Lower leg skin (tissue), 4 donors: ENCODE measurements at regions of chr1 and their contacts with region 1.

Region 1: DNA sequence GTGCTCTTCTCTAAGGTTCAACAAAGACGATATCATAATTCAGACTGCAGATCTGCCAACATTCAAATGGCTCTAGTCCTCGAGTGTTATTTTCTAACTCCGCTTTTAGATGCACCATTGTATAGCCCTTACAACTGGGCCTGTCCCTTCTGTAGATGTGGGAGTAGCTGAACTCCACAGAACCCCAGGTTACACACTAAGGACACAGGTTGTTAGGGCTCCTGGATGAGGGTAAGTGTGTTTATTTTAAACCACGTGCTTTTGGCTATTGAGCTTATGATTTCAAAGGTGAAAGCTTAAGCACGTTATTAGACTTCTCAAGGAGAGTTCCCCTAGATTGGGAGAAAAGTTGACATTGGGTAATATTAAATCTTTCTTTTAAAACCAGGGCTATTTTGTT is 64.7 kb downstream of the MPZL1 start:
- DNase-seq: no peak
- H3K4me3 ChIP-seq: no peak overlapping the region
- CTCF ChIP-seq: no peak
- POLR2A ChIP-seq: no peak

Region 2: GRCh38 chr1:167770127-167770526 is 16.4 kb before region 1 on chr1:
- intact Hi-C with region 1: loop called (anchors 2 kb)
- DNase-seq: no peak
- H3K4me3 ChIP-seq: no peak overlapping the region
- CTCF ChIP-seq: no peak
- POLR2A ChIP-seq: no peak

Region 3: DNA sequence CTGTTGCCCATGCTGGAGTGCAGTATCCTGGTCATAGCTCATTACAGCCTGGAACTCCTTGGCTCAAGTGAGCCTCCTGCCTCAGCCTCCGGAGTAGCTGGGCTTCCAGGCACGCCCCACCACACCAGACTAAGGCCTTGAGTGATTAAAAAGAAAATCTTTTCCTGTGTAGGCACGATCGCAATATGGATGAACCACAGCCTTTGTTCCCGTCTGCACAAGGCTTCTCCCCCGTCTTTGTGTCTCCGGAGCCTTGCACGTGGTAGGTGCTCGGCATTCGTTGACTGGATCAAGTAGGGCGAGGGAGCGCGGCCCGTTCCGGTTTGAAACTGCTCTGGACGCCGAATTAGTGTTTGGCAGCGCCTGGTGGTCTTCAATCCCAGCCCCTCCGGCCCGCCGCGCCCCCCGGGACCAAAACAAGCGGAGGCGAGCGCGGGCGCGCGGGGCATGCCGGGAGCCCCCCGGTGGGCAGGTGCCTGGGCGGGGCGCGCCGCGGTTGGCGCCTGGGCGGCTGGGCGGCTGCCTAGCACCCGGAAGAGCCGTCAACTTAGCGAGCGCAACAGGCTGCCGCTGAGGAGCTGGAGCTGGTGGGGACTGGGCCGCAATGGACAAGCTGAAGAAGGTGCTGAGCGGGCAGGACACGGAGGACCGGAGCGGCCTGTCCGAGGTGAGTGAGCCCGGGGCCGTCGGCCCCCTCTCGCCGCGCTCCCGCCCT is 439.1 kb after region 1 on chr1 and contains the start of gene SFT2D2:
- intact Hi-C with region 1: no loop called
- DNase-seq: peak; percentile 58 to 94
- H3K4me3 ChIP-seq: peak within 1 kb of the TSS; percentile 94
- CTCF ChIP-seq: no peak
- POLR2A ChIP-seq: no peak
- total RNA-seq, gene SFT2D2: 43.7 to 81.3 (median 53.2) TPM

Region 4: GRCh38 chr1:168991667-168992475 is 1205.4 kb after region 1 on chr1:
- intact Hi-C with region 1: no loop called
- DNase-seq: no peak
- H3K4me3 ChIP-seq: no peak overlapping the region
- CTCF ChIP-seq: no peak
- POLR2A ChIP-seq: no peak